ENCODE measurements at regions of chr6 and their contacts with region 1.

Region 1: DNA sequence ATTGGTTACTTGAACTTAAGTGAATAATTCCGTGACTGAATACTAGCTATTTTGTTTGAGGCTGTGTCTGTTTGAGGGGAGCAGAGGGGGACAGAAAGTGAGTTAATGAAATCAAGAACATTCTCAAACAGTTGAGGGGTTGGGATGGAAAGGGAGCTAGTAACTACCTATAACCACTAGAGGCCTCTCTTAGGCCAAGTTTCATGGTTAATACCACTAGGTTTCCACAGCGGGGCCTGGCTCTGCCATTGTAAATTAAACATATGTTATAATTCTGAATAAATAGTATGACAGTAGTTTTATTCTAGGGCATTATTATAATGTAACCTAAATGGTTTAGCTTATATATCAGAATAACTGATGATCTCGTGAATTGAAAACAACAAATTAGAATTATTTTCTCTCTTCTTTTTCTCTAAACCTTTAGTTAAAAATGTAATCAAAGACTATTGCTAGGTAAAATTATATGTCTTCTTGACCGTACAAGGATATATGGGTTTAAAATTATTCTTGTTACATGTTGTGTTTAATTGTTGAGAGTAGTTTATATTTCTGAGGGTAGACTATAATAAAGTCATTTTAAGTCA is 108.1 kb downstream of the BCKDHB start:
- ATAC-seq: peak; percentile 58 to 93 (median 76)
- H3K4me3 ChIP-seq: no peak overlapping the region
- H3K27ac ChIP-seq: no peak overlapping the region
- H3K4me1 ChIP-seq: peaks cover 0 to 5% of the 10 kb centered on the region in 2 donors

Region 2: GRCh38 chr6:79949233-79949632 is 265.3 kb before region 1 on chr6:
- in situ Hi-C with region 1: no loop called
- ATAC-seq: peak in 2 of 8 experiments; percentile 5 to 8
- H3K4me3 ChIP-seq: no peak overlapping the region
- H3K27ac ChIP-seq: no peak overlapping the region
- H3K4me1 ChIP-seq: peaks cover 2 to 18% of the 10 kb centered on the region in 2 donors

Region 3: GRCh38 chr6:80690551-80691131 is 476.1 kb after region 1 on chr6:
- in situ Hi-C with region 1: loop called in 1 of 9 experiments (anchors 25 kb)
- ATAC-seq: peak; percentile 88 to 98 (median 96)
- H3K4me3 ChIP-seq: no peak overlapping the region
- H3K27ac ChIP-seq: peak overlapping the region; percentile 30 to 51
- H3K4me1 ChIP-seq: peaks cover 0 to 3% of the 10 kb centered on the region in 2 donors

Region 4: GRCh38 chr6:82040405-82041221 is 1826.1 kb after region 1 on chr6:
- in situ Hi-C with region 1: loop called in 1 of 9 experiments (anchors 25 kb)
- ATAC-seq: peak; percentile 91 to 99 (median 94)
- H3K4me3 ChIP-seq: no peak overlapping the region
- H3K27ac ChIP-seq: no peak overlapping the region
- H3K4me1 ChIP-seq: no peaks in the 10 kb centered on the region

Measured in motor neuron (in vitro differentiated cells).